Adrenal gland (tissue), 19 donors: ENCODE measurements at regions of chr3 and their contacts with region 1.

Region 1: GRCh38 chr3:47315069-47315647 is 32.4 kb downstream of the KLHL18 start:
- DNase-seq: peak; percentile 24 to 68 (median 52)
- H3K4me3 ChIP-seq: no peak overlapping the region
- H3K27ac ChIP-seq: no peak overlapping the region
- H3K4me1 ChIP-seq: peaks cover 0 to 30% of the 10 kb centered on the region in 2 donors
- H3K27me3 ChIP-seq: no peaks in the 10 kb centered on the region
- CTCF ChIP-seq: no peak
- POLR2A ChIP-seq: no peak

Region 2: GRCh38 chr3:47282424-47283192 is 32.5 kb before region 1 on chr3 and contains the starts of genes KIF9 and KLHL18:
- intact Hi-C with region 1: loop called in 1 of 2 experiments (anchors 5 kb)
- DNase-seq: peak; percentile 94 to 97 (median 96)
- H3K4me3 ChIP-seq: peak within 1 kb of the TSS; percentile 63 to 87 (median 76)
- H3K27ac ChIP-seq: peak within 1 kb of the TSS; percentile 86 to 99 (median 91)
- H3K4me1 ChIP-seq: peaks cover 13 to 39% of the 10 kb centered on the region in 2 donors
- H3K27me3 ChIP-seq: no peaks in the 10 kb centered on the region
- CTCF ChIP-seq: no peak
- POLR2A ChIP-seq: peak; percentile 83 to 84
- total RNA-seq, gene KIF9: 1.1 to 9.8 (median 5.9) TPM
- total RNA-seq, gene KLHL18: 10.6 to 62.1 (median 30.5) TPM

Region 3: GRCh38 chr3:47433796-47434195 is 118.6 kb after region 1 on chr3:
- intact Hi-C with region 1: no loop called
- DNase-seq: peak in 1 of 7 donors; percentile 4
- H3K4me3 ChIP-seq: no peak overlapping the region
- H3K27ac ChIP-seq: no peak overlapping the region
- H3K4me1 ChIP-seq: peaks cover 14 to 39% of the 10 kb centered on the region in 2 donors
- H3K27me3 ChIP-seq: no peaks in the 10 kb centered on the region
- CTCF ChIP-seq: no peak
- POLR2A ChIP-seq: no peak

Region 4: GRCh38 chr3:47513125-47513929 is 198.2 kb after region 1 on chr3 and contains the start of gene ELP6:
- intact Hi-C with region 1: no loop called
- DNase-seq: peak; percentile 96 to 98 (median 97)
- H3K4me3 ChIP-seq: peak within 1 kb of the TSS; percentile 15 to 82 (median 59)
- H3K27ac ChIP-seq: peak within 1 kb of the TSS; percentile 47 to 96 (median 89)
- H3K4me1 ChIP-seq: peaks cover 0 to 12% of the 10 kb centered on the region in 2 donors
- H3K27me3 ChIP-seq: no peaks in the 10 kb centered on the region
- CTCF ChIP-seq: peak; percentile 24 to 68 (median 60)
- POLR2A ChIP-seq: peak; percentile 38 to 67
- total RNA-seq, gene ELP6: 41.3 to 125 (median 45.4) TPM